ENCODE measurements at regions of chr17 and their contacts with region 1.

Region 1: DNA sequence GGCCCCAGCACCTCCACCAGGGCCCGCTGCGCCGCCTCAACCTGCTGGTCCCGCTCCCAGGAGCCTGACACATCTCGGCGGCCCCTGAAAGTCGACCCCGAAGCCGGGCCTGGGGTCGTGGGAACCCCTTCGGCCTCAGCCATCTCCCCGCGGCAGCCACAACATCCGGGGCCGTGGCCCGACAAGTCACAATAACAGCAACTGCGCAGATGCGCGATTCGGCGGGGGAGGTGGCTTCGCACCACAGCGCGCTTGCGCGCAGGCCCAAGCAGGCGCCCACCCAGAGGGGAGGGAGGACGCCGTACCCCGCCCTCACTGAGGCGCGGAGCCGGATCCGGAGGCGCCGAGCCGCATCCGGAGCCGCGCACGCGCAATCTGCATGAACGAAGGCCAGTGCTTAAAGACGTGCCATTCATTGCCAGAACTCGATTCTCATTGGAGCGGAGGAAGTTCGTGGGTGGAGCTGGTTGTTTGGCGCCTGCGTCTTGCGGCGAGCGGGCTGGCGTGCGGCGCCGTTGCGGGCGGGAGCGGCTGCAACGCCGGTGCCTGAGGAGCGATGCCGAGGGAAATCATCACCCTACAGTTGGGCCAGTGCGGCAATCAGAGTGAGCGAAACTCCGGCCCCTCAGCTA is at the starts of genes RETREG3 and TUBG1:
- DNase-seq: peak; percentile 99
- H3K4me3 ChIP-seq: peak within 1 kb of the TSS; percentile 82 to 97 (median 87)
- H3K27ac ChIP-seq: peak within 1 kb of the TSS; percentile 91 to 97 (median 94)
- H3K4me1 ChIP-seq: peaks cover 0 to 42% (median 37%) of the 10 kb centered on the region in 4 donors
- H3K27me3 ChIP-seq: no peaks in the 10 kb centered on the region
- CTCF ChIP-seq: peak in 3 of 4 experiments; percentile 29 to 52 (median 34)
- EP300 ChIP-seq: no peak
- POLR2A ChIP-seq: peak; percentile 63 to 85
- total RNA-seq, gene RETREG3: 47.1 to 82.0 (median 53.7) TPM
- total RNA-seq, gene TUBG1: 22.1 to 35.0 (median 23.9) TPM

Region 2: DNA sequence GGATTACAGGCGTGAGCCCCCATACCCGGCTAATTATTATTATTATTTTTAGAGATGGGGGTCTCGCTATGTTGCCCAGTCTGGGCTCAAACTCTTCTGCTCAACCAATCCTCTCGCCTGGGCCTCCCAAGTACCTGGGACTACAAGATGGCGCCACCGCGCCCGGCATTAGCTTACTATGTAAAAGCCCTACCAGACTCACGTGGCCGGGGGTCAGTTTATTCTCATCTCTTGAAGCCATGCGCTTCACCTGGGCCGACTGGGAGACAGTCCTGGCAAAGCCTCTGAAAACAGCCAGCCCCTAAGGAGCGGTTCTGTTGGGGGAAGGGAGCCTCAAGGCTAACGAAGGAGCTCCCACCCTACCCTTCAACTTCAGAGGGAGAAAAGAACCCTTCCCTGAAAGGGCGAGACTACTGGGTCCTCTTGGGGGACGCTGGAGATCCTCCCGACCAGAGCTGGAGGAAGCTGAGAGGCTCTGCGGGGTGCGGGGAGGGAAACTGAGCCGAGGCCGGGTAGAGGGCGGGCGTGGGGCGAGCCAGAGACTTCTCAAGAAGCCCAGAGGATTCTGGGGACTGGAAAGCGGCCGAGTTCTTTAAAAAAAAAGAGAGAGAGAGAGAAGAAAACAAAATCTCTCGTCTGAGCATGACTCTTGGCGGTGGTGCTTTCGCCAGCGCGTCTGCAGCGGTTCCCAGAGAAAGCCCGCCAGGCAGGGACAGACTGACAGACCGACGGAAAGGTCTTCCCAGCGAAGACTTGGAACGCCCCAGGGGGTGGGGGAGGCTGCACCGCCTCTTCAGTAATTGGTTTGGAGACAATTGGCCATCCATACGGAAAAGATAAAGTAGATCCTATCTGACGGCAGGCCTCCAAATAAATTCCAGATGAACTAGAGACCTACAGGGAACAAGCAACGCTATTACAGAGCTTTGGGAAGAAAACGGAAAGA is 44.2 kb after region 1 on chr17:
- intact Hi-C with region 1: loop called (anchors 1 kb)
- DNase-seq: peak; percentile 92
- H3K4me3 ChIP-seq: peak overlapping the region; percentile 18 to 46 (median 40)
- H3K27ac ChIP-seq: peak overlapping the region; percentile 80 to 88 (median 85)
- H3K4me1 ChIP-seq: peaks cover 0 to 15% (median 11%) of the 10 kb centered on the region in 4 donors
- H3K27me3 ChIP-seq: no peaks in the 10 kb centered on the region
- CTCF ChIP-seq: no peak
- EP300 ChIP-seq: peak in 1 of 4 donors; percentile 8
- POLR2A ChIP-seq: no peak

Region 3: DNA sequence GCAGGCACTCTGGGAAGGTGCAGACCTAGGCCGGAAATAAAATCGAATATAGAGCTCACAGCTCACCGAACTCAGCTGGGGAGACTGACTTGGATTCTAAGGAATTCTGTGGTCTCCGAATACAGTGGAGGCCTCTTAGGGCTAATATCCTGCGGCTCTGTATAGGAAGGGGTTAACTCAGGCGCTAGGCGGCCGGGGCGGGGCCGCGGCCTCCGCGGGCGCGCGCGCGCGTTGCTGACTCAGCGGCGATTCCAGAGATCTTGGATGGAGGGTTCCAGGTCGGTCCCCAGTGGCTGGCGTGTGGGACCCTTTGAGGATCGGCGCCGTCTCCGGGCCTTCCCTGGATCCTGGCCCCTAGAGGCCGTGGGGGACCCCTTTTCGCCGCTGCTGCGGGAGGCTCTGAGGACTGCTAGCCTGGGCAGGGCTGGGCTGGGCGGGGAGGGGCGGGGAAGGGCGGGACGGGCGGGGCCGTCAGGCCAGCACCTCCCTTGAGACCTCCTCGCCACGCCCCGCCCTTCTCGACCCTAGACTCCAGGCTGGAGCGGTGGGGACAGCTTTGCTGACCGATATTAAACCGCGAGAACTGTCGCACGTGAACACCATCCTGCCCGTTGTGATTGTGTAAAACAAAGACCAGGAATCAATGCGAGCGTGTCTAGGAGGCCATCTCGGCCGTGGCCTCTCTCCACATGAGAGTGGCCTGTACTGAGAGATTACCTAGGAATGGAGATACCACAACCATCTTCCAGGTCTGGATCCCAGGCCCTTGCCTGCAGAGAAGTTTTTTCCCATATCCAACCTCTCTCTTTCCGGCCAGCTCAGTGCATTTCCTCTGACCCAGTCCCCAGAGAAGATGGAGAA is 68.9 kb after region 1 on chr17:
- intact Hi-C with region 1: loop called (anchors 1 kb)
- DNase-seq: peak; percentile 96
- H3K4me3 ChIP-seq: peak overlapping the region; percentile 61 to 81 (median 68)
- H3K27ac ChIP-seq: peak overlapping the region; percentile 97 to 99 (median 98)
- H3K4me1 ChIP-seq: peaks cover 0 to 82% (median 76%) of the 10 kb centered on the region in 4 donors
- H3K27me3 ChIP-seq: no peaks in the 10 kb centered on the region
- CTCF ChIP-seq: no peak
- EP300 ChIP-seq: peak in 1 of 4 donors; percentile 22
- POLR2A ChIP-seq: peak in 1 of 2 donors; percentile 39

Region 4: GRCh38 chr17:42964161-42964932 is 355.0 kb after region 1 on chr17 and contains the start of gene AARSD1:
- intact Hi-C with region 1: no loop called
- DNase-seq: peak; percentile 96
- H3K4me3 ChIP-seq: peak within 1 kb of the TSS; percentile 54 to 72 (median 64)
- H3K27ac ChIP-seq: peak within 1 kb of the TSS; percentile 84 to 91 (median 87)
- H3K4me1 ChIP-seq: peaks cover 0 to 18% (median 9%) of the 10 kb centered on the region in 4 donors
- H3K27me3 ChIP-seq: no peaks in the 10 kb centered on the region
- CTCF ChIP-seq: no peak
- EP300 ChIP-seq: peak in 1 of 4 donors; percentile 53
- POLR2A ChIP-seq: peak; percentile 70 to 82
- total RNA-seq, gene AARSD1: 18.5 to 41.3 (median 25.7) TPM